Activated CD4-positive, alpha-beta T cell treated with anti-CD3 and anti-CD28 coated beads, Interleukin-2, amount 10 ng/mL, durations not matched to agents 24 days and 14 days (primary cell): ENCODE measurements at regions of chr14 and their contacts with region 1.

Region 1: DNA sequence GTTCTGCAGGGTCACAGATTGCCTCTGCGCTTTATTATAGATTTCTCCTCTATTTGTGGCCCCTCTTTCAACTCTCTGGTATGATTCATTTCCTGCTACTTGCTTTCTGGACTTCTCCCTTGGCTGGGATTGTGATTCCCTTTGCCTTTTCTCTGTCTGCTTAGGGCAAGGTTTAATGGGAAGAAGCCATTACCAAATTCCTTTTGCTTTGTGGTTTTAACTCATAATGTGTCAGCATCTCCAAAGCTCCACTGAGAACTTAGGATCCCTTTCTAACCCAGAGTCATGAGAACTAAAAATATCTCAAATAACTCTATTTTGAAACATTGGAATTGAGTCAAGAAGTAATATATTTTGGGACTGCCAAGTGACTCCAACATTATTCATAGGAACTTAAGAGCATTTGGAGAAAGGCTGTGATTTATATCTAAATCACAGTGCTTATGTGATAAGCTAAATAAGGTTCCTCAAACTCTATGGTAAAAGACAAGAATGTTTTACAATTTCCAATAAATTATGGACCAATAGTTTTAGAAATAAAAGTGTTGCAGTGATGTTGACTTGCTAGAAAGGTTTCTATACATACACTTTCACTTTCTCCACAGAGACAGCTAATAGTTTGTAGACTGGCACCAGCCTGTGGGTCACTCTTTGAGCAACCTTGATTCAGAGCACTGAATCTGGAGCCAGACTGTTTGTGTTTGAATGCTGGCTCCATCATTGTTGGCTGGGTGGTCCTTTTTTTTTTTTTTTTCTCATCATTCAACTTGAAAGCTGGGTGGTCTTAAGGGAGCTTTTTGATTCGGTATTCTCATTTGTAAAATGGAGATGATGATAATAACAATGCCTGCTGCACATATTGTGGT is 93.9 kb downstream of the DACT1 start:
- DNase-seq: no peak
- H3K4me3 Mint-ChIP-seq: no peak overlapping the region
- H3K27ac Mint-ChIP-seq: no peak overlapping the region
- H3K4me1 Mint-ChIP-seq: peaks cover 8% of the 10 kb centered on the region
- H3K27me3 Mint-ChIP-seq: peaks cover 4% of the 10 kb centered on the region

Region 2: GRCh38 chr14:58297762-58298476 is 433.8 kb before region 1 on chr14:
- intact Hi-C with region 1: no loop called
- DNase-seq: peak; percentile 99
- H3K4me3 Mint-ChIP-seq: no peak overlapping the region
- H3K27ac Mint-ChIP-seq: no peak overlapping the region
- H3K4me1 Mint-ChIP-seq: peaks cover 20% of the 10 kb centered on the region
- H3K27me3 Mint-ChIP-seq: no peaks in the 10 kb centered on the region

Region 3: GRCh38 chr14:58637391-58638230 is 94.1 kb before region 1 on chr14 and contains the start of gene DACT1:
- intact Hi-C with region 1: no loop called
- DNase-seq: peak; percentile 89
- H3K4me3 Mint-ChIP-seq: peak within 1 kb of the TSS; percentile 87
- H3K27ac Mint-ChIP-seq: peak within 1 kb of the TSS; percentile 88
- H3K4me1 Mint-ChIP-seq: peaks cover 43% of the 10 kb centered on the region
- H3K27me3 Mint-ChIP-seq: peaks cover 34% of the 10 kb centered on the region
- total RNA-seq, gene DACT1: 3.3 and 3.8 TPM in 2 replicates

Region 4: DNA sequence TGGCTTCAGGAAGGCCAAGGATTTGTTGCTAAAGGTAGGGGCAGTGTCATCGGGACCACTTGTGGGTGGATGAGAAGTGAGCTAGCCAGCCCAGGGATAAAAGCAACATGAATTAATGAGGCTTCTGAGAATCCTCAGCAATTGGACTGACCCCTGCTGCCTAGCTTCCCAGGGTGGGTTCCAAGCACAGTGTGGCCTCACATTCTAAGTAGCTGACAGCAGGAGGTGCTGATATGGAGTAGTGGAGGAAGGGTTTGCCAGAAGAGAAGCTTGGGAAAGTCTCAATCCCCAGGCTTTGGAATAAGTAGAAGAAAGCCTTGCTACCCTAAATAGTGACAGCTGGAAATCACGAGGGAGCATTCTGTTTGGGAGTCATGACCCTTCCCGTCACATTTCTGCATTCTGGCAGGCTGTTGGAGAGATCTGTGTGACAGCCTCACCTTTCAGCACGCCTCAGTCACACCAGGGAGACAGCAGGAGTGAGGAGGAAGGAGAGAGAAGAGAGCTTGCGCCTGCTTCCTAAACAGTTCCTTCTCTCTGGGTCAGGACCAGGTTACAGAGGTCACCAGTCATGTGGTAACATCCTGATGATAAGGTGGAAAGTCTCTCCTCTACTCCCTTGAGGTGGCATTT is 62.7 kb before region 1 on chr14:
- intact Hi-C with region 1: no loop called
- DNase-seq: no peak
- H3K4me3 Mint-ChIP-seq: no peak overlapping the region
- H3K27ac Mint-ChIP-seq: no peak overlapping the region
- H3K4me1 Mint-ChIP-seq: peaks cover 4% of the 10 kb centered on the region
- H3K27me3 Mint-ChIP-seq: peaks cover 7% of the 10 kb centered on the region

Region 5: DNA sequence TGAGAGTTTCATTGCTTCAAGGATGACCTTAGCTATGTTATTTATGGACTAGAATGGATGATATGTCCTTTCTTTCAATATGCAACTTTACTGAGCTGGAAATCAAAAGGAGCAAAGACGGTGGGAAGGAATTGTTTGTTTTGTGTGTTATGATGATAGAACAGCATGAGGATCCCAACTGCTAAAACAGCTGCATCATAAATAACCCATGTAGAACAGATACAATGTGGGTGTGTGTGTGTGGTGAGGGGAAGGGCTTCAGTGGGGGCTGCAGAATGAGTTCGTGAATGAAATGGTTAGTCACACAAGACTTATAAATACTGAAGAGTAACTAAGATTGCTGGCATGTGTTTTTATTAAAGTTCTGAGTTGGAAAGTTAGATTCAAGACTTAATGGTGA is 13.9 kb before region 1 on chr14:
- intact Hi-C with region 1: no loop called
- DNase-seq: no peak
- H3K4me3 Mint-ChIP-seq: no peak overlapping the region
- H3K27ac Mint-ChIP-seq: no peak overlapping the region
- H3K4me1 Mint-ChIP-seq: peaks cover 4% of the 10 kb centered on the region
- H3K27me3 Mint-ChIP-seq: no peaks in the 10 kb centered on the region

Region 6: DNA sequence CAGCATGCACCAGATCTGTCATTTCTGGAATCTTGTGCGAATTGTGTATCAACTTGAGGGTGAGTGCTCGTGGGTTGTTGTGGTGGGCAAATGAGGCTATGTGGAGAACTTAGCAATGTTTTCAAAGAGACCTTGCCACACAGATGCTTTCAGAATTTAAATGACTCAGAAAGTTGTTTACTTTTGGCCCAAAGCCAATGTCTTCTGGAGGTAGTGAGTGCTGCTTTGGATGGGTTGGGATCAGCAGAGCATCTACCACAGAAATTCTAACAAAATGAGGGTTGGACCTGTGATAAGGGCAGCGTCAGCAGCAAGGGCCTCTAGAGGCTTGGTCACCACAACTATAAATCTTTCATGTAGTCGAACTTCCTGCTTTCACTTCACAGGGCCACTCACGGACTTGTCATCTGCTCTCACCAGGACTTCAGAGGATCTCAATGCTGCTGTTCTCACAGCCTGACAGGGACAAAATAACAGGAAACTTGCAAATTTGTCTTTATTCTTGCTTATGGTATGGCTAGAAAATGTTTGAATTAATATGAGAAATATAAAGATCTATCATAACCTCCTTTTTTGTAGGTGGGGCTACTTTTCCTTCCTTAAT is 17.5 kb after region 1 on chr14:
- intact Hi-C with region 1: loop called (anchors 2 kb)
- DNase-seq: peak; percentile 75
- H3K4me3 Mint-ChIP-seq: no peak overlapping the region
- H3K27ac Mint-ChIP-seq: peak overlapping the region; percentile 25
- H3K4me1 Mint-ChIP-seq: peaks cover 10% of the 10 kb centered on the region
- H3K27me3 Mint-ChIP-seq: peaks cover 4% of the 10 kb centered on the region